Naive thymus-derived CD4-positive, alpha-beta T cell (primary cell): ENCODE measurements at regions of chr11 and their contacts with region 1.

Region 1: GRCh38 chr11:65859200-65859811 is 927 bp upstream of the MUS81 start:
- DNase-seq: peak; percentile 84 to 97 (median 90)
- ATAC-seq: peak; percentile 71
- H3K4me3 ChIP-seq: peak overlapping the region; percentile 65
- H3K4me3 Mint-ChIP-seq: peak overlapping the region; percentile 92 to 100 (median 97)
- H3K27ac ChIP-seq: peak overlapping the region; percentile 88
- H3K27ac Mint-ChIP-seq: peak overlapping the region; percentile 88 to 99 (median 97)
- H3K4me1 ChIP-seq: peaks cover 39 to 41% of the 10 kb centered on the region in 2 donors
- H3K4me1 Mint-ChIP-seq: peaks cover 35 to 63% (median 50%) of the 10 kb centered on the region in 7 donors
- H3K27me3 ChIP-seq: no peaks in the 10 kb centered on the region
- H3K27me3 Mint-ChIP-seq: no peaks in the 10 kb centered on the region

Region 2: DNA sequence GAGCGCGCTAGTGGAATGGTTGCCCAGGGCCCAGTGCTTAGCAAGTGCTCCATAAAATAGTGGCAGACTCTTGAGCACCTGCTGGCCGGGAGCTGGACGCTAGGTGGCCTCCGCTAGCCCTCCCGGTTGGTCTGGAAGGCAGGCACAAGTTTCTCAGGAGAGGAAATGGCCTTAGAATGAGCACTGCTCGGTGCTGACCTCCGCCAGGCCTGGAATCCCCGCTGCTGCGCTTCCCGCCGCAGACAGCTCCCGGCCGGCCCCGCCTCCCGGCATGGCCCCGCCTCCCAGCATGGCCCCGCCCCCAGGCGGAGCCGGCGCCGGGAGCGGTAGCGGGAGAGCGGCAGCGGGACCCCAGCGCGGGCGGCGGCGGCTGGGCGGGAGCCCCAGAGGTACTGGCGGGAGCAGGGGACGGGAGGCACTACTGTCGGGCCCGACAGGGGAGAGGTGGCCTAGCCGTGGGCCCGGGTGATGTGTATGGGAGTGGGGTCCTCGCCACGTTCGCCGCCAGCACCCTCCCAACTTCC is 221.4 kb before region 1 on chr11 and contains the start of gene SIPA1:
- CTCF ChIA-PET with region 1: no interaction called
- POLR2A ChIA-PET with region 1: interaction called, 4 read pairs
- intact Hi-C with region 1: loop called in 1 of 2 experiments (anchors 1 kb)
- DNase-seq: peak; percentile 57 to 93 (median 74)
- ATAC-seq: peak; percentile 62
- H3K4me3 ChIP-seq: peak within 1 kb of the TSS; percentile 90
- H3K4me3 Mint-ChIP-seq: peak within 1 kb of the TSS; percentile 89 to 99 (median 95)
- H3K27ac ChIP-seq: peak within 1 kb of the TSS; percentile 97
- H3K27ac Mint-ChIP-seq: peak within 1 kb of the TSS; percentile 76 to 100 (median 97)
- H3K4me1 ChIP-seq: peaks cover 45 to 58% of the 10 kb centered on the region in 2 donors
- H3K4me1 Mint-ChIP-seq: peaks cover 26 to 52% (median 47%) of the 10 kb centered on the region in 7 donors
- H3K27me3 ChIP-seq: no peaks in the 10 kb centered on the region
- H3K27me3 Mint-ChIP-seq: no peaks in the 10 kb centered on the region
- total RNA-seq, gene SIPA1: 145 to 249 (median 198) TPM

Region 3: DNA sequence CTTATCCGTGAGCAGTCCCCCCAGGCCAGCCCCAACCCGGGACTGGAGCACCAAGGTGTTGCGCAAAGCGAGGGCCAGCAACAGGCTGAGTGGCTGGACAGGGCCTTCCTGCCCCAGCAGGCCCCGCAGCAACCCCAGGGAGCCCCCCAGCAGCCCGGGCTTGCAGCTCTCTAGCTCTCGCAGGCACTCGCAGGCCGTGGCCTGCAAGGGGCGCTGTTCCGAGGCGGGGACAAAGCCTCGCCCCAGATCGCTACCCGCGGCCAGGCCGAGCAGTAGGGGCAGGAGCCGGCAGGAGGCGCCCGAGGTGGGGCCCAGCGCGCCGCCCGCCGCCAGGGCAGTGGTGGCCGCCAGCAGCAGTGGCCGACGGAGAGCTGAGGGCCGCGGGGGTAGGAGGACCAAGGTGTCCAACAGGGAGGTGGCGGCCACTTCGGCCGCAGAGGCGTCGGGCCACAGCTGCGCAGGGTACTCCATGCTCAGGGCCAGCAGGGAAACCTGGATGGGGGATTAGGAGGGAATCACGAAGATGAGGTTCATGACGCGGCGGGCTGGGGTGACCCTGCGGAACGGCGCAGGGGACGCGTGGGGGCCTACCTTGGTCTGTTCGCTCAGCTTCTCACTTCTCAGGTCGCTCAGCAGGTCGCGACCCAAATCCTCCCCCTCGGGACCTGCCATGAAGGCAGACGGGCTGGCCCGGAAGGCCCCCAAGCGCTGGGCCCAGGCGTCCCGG is 79.3 kb before region 1 on chr11:
- CTCF ChIA-PET with region 1: no interaction called
- POLR2A ChIA-PET with region 1: interaction called, 8 read pairs
- intact Hi-C with region 1: loop called in 1 of 2 experiments (anchors 2 kb)
- DNase-seq: peak; percentile 55 to 90 (median 72)
- ATAC-seq: peak; percentile 84
- H3K4me3 ChIP-seq: peak overlapping the region; percentile 74
- H3K4me3 Mint-ChIP-seq: peak overlapping the region; percentile 77 to 91 (median 86)
- H3K27ac ChIP-seq: peak overlapping the region; percentile 75
- H3K27ac Mint-ChIP-seq: peak overlapping the region in 7 of 9 donors; percentile 39 to 88 (median 73)
- H3K4me1 ChIP-seq: peaks cover 7 to 10% of the 10 kb centered on the region in 2 donors
- H3K4me1 Mint-ChIP-seq: peaks cover 5 to 20% (median 13%) of the 10 kb centered on the region in 7 donors
- H3K27me3 ChIP-seq: no peaks in the 10 kb centered on the region
- H3K27me3 Mint-ChIP-seq: peaks cover 0 to 15% (median under 1%) of the 10 kb centered on the region in 5 donors

Region 4: DNA sequence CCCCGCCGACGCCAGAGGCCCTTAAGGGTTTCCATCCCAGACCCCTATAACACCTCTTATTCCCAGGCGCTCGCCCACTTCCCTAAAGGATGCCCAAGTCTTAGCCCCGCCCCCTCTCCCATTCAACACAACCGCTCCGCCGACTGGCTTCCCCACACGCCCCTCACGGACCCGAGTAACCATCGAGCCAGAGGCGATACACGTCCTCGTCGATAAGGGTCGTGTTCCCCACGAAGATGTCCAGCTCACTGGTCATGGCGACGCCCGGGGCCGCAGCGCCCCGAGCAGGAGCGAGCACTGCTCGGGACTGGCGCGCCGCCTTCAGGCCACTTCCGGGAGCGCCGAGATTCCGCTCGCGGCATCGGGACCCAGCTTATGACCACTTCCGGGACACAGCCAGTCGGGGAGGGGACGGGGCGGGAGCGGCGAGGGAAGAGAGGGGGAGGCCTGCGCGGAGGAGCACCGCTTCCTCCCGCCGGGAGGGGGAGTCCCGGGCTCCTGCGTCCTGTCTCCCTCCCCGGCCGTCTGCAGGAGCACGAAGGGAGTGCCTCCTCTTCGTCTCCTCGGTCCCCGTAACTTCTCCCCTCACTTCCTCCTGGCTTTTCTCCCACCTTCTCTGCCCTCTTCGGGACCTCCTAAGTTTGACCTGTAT is 29.0 kb after region 1 on chr11 and contains the start of gene FIBP:
- CTCF ChIA-PET with region 1: interaction called, 159 read pairs
- POLR2A ChIA-PET with region 1: interaction called, 316 read pairs
- intact Hi-C with region 1: loop called (anchors 1 kb)
- DNase-seq: peak; percentile 84 to 95 (median 90)
- ATAC-seq: peak; percentile 74
- H3K4me3 ChIP-seq: peak within 1 kb of the TSS; percentile 84
- H3K4me3 Mint-ChIP-seq: peak within 1 kb of the TSS; percentile 88 to 97 (median 93)
- H3K27ac ChIP-seq: peak within 1 kb of the TSS; percentile 92
- H3K27ac Mint-ChIP-seq: peak within 1 kb of the TSS; percentile 93 to 99 (median 97)
- H3K4me1 ChIP-seq: peaks cover 37 to 45% of the 10 kb centered on the region in 2 donors
- H3K4me1 Mint-ChIP-seq: peaks cover 50 to 69% (median 53%) of the 10 kb centered on the region in 7 donors
- H3K27me3 ChIP-seq: no peaks in the 10 kb centered on the region
- H3K27me3 Mint-ChIP-seq: no peaks in the 10 kb centered on the region
- total RNA-seq, gene FIBP: 25.9 to 72.1 (median 43.4) TPM

Region 5: GRCh38 chr11:65945430-65945911 is 86.2 kb after region 1 on chr11 and contains the start of gene TSGA10IP:
- CTCF ChIA-PET with region 1: no interaction called
- POLR2A ChIA-PET with region 1: no interaction called
- intact Hi-C with region 1: no loop called
- DNase-seq: no peak
- ATAC-seq: no peak
- H3K4me3 ChIP-seq: no peak within 1 kb of the TSS
- H3K4me3 Mint-ChIP-seq: no peak within 1 kb of the TSS
- H3K27ac ChIP-seq: no peak within 1 kb of the TSS
- H3K27ac Mint-ChIP-seq: no peak within 1 kb of the TSS
- H3K4me1 ChIP-seq: no peaks in the 10 kb centered on the region
- H3K4me1 Mint-ChIP-seq: peaks cover 0 to 6% (median 0%) of the 10 kb centered on the region in 7 donors
- H3K27me3 ChIP-seq: no peaks in the 10 kb centered on the region
- H3K27me3 Mint-ChIP-seq: peaks cover 0 to 8% (median 0%) of the 10 kb centered on the region in 5 donors
- total RNA-seq, gene TSGA10IP: 0.64 TPM in 1 of 5 experiments, not detected in the others

Region 6: GRCh38 chr11:65988791-65989592 is 129.7 kb after region 1 on chr11:
- CTCF ChIA-PET with region 1: interaction called, 3 read pairs
- POLR2A ChIA-PET with region 1: interaction called, 3 read pairs
- intact Hi-C with region 1: loop called (anchors 1 kb)
- DNase-seq: peak; percentile 66 to 95 (median 91)
- ATAC-seq: peak; percentile 100
- H3K4me3 ChIP-seq: no peak overlapping the region
- H3K4me3 Mint-ChIP-seq: no peak overlapping the region
- H3K27ac ChIP-seq: no peak overlapping the region
- H3K27ac Mint-ChIP-seq: peak overlapping the region; percentile 0 to 90 (median 74)
- H3K4me1 ChIP-seq: no peaks in the 10 kb centered on the region
- H3K4me1 Mint-ChIP-seq: peaks cover 5 to 7% (median 6%) of the 10 kb centered on the region in 7 donors
- H3K27me3 ChIP-seq: no peaks in the 10 kb centered on the region
- H3K27me3 Mint-ChIP-seq: no peaks in the 10 kb centered on the region

Region 7: DNA sequence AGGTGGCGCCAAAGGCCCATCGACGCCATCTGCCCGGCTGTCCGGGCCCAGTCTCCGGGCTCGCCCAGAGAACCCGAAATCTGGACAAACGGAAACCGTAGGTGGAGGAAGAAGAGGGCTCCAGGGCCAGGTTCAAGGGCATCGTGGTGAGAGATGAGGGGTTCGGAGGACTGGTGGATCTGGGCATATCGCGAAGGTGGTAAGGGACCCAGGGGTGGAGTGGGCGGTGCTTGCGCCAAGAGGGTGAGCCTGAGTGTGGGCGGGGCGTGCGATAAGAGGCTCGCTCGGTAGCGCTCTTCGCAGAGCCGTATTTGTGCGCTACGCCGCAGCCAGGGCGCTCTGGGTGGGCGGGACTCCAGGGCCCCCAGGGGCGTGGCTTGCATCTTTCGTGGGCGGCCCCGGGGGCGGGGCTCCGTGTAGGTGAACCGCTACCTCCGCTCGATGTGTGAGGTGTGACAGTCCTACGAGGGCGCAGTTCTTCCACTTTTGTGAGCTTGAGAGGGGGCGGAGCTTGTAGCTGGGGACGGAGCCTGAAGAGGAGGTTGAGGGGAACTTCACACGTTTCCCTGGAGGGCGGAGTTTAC is 452.8 kb after region 1 on chr11:
- CTCF ChIA-PET with region 1: no interaction called
- POLR2A ChIA-PET with region 1: interaction called, 4 read pairs
- intact Hi-C with region 1: loop called in 1 of 2 experiments (anchors 1 kb)
- DNase-seq: peak; percentile 93 to 100 (median 100)
- ATAC-seq: peak; percentile 84
- H3K4me3 ChIP-seq: peak overlapping the region; percentile 92
- H3K4me3 Mint-ChIP-seq: peak overlapping the region; percentile 63 to 97 (median 94)
- H3K27ac ChIP-seq: peak overlapping the region; percentile 79
- H3K27ac Mint-ChIP-seq: peak overlapping the region; percentile 93 to 100 (median 98)
- H3K4me1 ChIP-seq: peaks cover 11 to 34% of the 10 kb centered on the region in 2 donors
- H3K4me1 Mint-ChIP-seq: peaks cover 17 to 34% (median 25%) of the 10 kb centered on the region in 7 donors
- H3K27me3 ChIP-seq: no peaks in the 10 kb centered on the region
- H3K27me3 Mint-ChIP-seq: peaks cover 0 to 2% (median 0%) of the 10 kb centered on the region in 5 donors

Region 8: GRCh38 chr11:66717925-66718319 is 858.6 kb after region 1 on chr11:
- CTCF ChIA-PET with region 1: no interaction called
- POLR2A ChIA-PET with region 1: no interaction called
- intact Hi-C with region 1: no loop called
- DNase-seq: no peak
- ATAC-seq: no peak
- H3K4me3 ChIP-seq: no peak overlapping the region
- H3K4me3 Mint-ChIP-seq: no peak overlapping the region
- H3K27ac ChIP-seq: no peak overlapping the region
- H3K27ac Mint-ChIP-seq: no peak overlapping the region
- H3K4me1 ChIP-seq: no peaks in the 10 kb centered on the region
- H3K4me1 Mint-ChIP-seq: peaks cover 0 to 10% (median 4%) of the 10 kb centered on the region in 7 donors
- H3K27me3 ChIP-seq: no peaks in the 10 kb centered on the region
- H3K27me3 Mint-ChIP-seq: peaks cover 9 to 63% (median 44%) of the 10 kb centered on the region in 5 donors